ENCODE measurements at regions of chr3 and their contacts with region 1.

Region 1: DNA sequence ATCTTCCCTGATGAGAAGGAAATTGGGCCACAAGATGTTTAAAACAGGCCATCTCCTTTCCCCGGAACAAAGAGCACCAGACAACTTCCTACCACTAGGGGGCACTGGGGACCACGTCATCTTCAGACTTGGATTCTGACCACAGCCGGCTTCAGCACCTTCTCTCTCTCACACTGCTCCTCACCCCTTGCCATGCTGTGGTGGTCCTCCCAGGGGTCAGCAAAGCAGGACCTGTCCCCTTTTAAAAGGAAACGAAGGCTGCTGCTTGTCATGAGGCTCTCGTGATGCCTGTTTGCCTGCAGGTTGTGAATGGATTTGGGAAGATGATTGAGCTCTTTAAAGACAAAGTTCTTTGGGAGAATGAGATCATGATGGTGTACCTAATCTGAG is 16.2 kb downstream of the RFT1 start:
- DNase-seq: no peak
- ATAC-seq: peak; percentile 99
- H3K4me3 ChIP-seq: no peak overlapping the region
- H3K27ac ChIP-seq: no peak overlapping the region
- H3K4me1 ChIP-seq: no peaks in the 10 kb centered on the region
- H3K27me3 ChIP-seq: no peaks in the 10 kb centered on the region
- CTCF ChIP-seq: peak; percentile 86 to 97 (median 94)
- EP300 ChIP-seq: no peak
- POLR2A ChIP-seq: no peak
- RAD21 ChIP-seq: peak; percentile 90

Region 2: DNA sequence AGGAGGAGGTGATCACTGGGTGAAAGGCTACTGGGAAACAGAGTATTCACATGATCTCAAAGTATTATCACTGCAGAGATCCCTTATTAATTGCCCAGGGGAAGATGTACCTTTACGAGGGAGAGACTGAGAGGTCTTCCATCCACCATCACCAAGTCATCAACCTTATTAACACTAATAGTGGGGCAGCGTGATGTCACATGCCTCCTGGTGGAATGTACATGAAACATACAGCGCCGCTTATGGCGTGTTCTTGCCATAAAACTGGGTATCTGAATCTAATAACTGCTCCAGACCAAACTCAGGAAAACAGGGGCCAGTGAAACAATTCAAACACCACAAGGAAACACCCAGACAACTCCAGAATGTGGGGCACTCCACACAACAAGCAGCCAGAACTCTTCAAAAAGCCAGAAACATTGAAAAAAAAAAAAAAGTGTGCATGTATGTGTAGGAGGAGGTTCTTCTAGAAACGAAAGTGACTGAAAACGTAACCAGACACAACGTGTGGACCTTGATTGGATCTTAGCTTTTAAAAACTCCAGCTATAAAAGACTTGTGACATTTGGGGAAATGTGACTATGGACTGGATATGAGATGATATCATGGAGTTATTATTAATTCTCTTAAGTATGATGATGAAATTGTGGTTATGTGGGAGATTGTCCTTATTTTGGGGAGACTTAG is 221.2 kb before region 1 on chr3:
- CTCF ChIA-PET with region 1: no interaction called
- POLR2A ChIA-PET with region 1: no interaction called
- RAD21 ChIA-PET with region 1: no interaction called
- SMC1A ChIA-PET with region 1: no interaction called
- in situ Hi-C with region 1: no loop called
- intact Hi-C with region 1: no loop called
- DNase-seq: peak; percentile 41
- ATAC-seq: peak; percentile 40
- H3K4me3 ChIP-seq: peak overlapping the region; percentile 59
- H3K27ac ChIP-seq: peak overlapping the region; percentile 22
- H3K4me1 ChIP-seq: peaks cover 28% of the 10 kb centered on the region
- H3K27me3 ChIP-seq: no peaks in the 10 kb centered on the region
- CTCF ChIP-seq: peak; percentile 34 to 42 (median 41)
- EP300 ChIP-seq: no peak
- POLR2A ChIP-seq: no peak
- RAD21 ChIP-seq: no peak

Region 3: DNA sequence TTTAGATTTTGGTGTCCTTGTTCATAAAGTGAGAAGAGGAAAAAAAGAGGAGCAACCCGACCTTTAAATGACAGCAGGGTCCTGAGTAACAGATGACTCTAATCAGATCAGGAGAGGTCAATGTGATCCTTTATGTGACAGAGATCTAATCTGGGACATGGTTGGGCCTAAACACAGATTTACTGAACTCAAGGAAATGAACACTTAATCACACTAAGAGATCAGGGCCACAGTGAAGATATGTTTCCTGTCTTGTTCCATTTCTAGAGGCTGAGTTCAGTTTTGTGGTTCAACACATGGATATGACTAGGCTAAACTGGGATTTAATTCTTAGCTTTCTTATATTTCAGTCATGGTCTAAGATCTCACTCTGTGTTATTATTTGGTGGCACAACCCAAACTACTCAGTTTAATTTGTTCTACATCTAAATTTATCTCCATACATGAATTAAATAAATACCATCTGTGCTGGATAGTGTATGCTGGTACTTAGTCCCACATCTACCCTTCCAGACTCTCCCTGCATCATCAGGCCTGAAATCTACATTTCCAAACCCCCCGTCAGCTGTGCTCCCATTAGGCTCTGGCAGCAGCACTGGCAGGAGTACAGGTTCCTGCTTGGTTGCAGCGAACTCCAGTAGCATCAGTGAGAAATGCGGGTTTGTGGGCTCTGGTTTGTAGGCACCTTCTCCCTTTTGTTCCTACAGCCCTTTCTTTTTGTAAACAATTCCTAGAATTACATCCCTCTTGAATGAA is 90.8 kb before region 1 on chr3:
- CTCF ChIA-PET with region 1: no interaction called
- POLR2A ChIA-PET with region 1: no interaction called
- RAD21 ChIA-PET with region 1: no interaction called
- SMC1A ChIA-PET with region 1: no interaction called
- in situ Hi-C with region 1: no loop called
- intact Hi-C with region 1: no loop called
- DNase-seq: no peak
- ATAC-seq: no peak
- H3K4me3 ChIP-seq: no peak overlapping the region
- H3K27ac ChIP-seq: no peak overlapping the region
- H3K4me1 ChIP-seq: peaks cover 14% of the 10 kb centered on the region
- H3K27me3 ChIP-seq: no peaks in the 10 kb centered on the region
- CTCF ChIP-seq: no peak
- EP300 ChIP-seq: no peak
- POLR2A ChIP-seq: no peak
- RAD21 ChIP-seq: no peak

Region 4: DNA sequence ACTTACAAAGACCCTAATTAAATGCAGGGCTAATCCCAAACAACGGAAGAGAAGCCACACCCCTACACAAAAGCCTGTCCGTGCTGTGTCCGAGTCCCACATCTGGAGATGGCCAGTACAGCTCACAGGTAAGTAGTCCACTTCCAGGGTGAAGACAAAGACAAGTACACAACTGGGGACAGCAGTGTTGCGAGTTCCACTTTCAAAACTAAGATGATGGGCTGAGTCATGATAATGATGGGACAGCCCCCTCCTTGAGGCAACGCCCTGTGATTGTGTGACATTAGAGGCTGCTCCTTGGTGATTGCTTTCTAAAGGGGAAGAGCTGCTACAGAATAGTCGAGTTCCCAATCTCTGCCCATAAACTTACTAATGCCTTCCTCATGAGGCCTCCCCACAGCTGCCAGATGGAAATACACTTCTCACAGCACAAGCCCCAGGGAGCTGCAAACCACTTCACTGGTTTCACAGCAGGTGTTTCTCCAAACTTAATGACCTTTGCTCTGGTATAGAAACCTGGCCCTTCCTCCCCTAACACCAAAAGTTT is 11.3 kb before region 1 on chr3:
- CTCF ChIA-PET with region 1: interaction called, 29 read pairs
- POLR2A ChIA-PET with region 1: interaction called, 5 read pairs
- RAD21 ChIA-PET with region 1: interaction called, 11 read pairs
- SMC1A ChIA-PET with region 1: interaction called, 11 read pairs
- in situ Hi-C with region 1: no loop called
- intact Hi-C with region 1: no loop called
- DNase-seq: peak; percentile 27
- ATAC-seq: peak; percentile 97
- H3K4me3 ChIP-seq: no peak overlapping the region
- H3K27ac ChIP-seq: peak overlapping the region; percentile 50; the same call in 1 of the 2 replicates
- H3K4me1 ChIP-seq: peaks cover 12% of the 10 kb centered on the region
- H3K27me3 ChIP-seq: no peaks in the 10 kb centered on the region
- CTCF ChIP-seq: no peak
- EP300 ChIP-seq: peak in 1 of 2 experiments; percentile 42; a peak in 1 of 4 replicates
- POLR2A ChIP-seq: peak; percentile 55
- RAD21 ChIP-seq: no peak

Region 5: GRCh38 chr3:53293867-53294266 is 179.9 kb after region 1 on chr3:
- CTCF ChIA-PET with region 1: interaction called, 7 read pairs
- POLR2A ChIA-PET with region 1: no interaction called
- RAD21 ChIA-PET with region 1: no interaction called
- SMC1A ChIA-PET with region 1: interaction called, 4 read pairs
- in situ Hi-C with region 1: no loop called
- intact Hi-C with region 1: loop called (anchors 5 kb)
- DNase-seq: no peak
- ATAC-seq: no peak
- H3K4me3 ChIP-seq: no peak overlapping the region
- H3K27ac ChIP-seq: no peak overlapping the region
- H3K4me1 ChIP-seq: no peaks in the 10 kb centered on the region
- H3K27me3 ChIP-seq: no peaks in the 10 kb centered on the region
- CTCF ChIP-seq: no peak
- EP300 ChIP-seq: no peak
- POLR2A ChIP-seq: no peak
- RAD21 ChIP-seq: no peak